Posterior vena cava (tissue), 2 donors: ENCODE measurements at regions of chr13 and their contacts with region 1.

Region 1: GRCh38 chr13:110108347-110109174 is 198.4 kb downstream of the COL4A1 start:
- DNase-seq: peak; percentile 90

Region 2: DNA sequence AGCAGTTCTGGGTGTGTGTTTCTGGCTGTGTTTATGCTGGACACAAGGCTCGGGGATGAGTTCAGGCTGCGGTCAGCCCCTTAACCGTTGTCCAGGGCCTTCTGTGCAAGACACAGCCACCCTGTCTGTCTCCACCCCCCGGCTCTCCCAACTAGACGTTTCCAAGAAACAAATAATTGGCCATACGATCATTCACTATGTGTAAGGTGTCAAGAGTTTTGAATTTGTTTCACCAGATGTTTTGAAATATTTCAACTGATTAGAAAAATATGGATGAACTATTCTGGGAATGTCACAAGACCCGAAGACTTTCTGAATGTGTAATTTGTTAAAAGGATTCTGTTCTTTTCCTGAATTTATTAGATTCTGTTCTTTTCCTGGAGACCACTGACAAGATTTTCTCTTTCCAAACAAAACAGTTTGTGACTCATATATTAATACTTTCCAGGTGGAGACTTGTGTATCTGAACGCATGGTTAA is 1161.0 kb before region 1 on chr13:
- intact Hi-C with region 1: loop called in 1 of 2 experiments (anchors 5 kb)
- DNase-seq: peak; percentile 84

Region 3: DNA sequence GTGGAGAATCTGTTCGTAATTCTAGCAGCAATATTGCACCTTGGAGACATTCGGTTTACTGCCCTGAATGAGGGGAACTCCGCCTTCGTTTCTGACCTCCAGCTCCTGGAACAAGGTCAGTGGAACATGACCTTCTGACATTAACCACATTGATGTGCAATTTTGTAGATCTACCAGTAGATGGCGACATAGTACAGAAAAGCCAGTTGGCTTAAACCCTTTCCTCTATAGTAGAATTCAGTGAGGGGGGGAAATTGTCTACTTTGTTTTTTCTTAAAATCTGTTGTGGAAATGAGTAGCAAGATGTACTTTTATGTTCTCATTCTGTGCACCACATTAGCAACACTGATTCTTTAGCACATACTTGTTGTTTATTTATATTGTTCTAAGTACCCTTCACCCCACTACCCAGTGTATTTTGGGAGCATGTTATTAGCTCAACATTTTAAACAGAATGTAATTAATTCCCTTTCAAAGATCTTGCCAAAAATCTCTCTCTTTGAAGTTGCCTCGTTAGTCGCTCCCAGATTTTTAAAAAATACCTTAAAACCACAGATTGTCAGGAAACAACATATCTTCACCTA is 1146.9 kb before region 1 on chr13:
- intact Hi-C with region 1: loop called in 1 of 2 experiments (anchors 10 kb)
- DNase-seq: no peak

Region 4: GRCh38 chr13:109145631-109146030 is 962.9 kb before region 1 on chr13:
- intact Hi-C with region 1: loop called (anchors 10 kb)
- DNase-seq: no peak

Region 5: DNA sequence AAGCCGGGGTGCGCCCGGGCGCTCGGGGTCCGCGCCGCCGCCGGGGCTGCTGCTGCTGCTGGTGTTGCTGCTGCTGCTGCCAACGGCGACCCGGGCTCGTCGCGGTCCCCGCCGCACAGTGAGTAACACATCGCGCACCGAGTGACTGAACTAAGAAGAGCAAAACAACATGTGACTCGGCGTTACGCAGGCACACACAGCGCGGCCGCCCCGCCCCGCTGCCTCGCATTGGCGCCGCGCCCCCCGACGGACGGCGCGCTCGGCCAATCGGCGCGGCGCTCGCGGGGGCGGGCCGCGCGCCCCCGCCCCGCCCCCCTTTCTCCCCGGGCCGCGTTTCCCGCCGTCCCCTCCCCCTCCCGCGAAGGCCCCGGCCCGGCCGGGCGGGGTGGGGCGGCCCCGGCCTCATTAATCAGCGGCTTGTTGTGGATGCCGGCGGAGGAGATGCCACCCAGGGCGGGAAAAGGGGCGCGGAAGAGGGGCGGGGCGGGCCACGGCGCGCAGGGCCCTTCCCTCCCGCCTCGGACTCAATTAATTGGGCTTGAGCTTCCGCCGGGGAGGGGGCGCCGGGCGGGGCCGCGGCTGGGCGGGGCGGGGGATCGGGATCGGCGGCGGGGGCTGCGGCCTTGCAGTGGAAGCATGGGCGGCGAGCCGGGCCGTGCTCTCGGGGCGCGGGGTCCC is 322.0 kb before region 1 on chr13 and contains the start of gene IRS2:
- intact Hi-C with region 1: loop called (anchors 5 kb)
- DNase-seq: peak; percentile 97
- total RNA-seq, gene IRS2: 15.9 to 25.1 TPM